Ovary (tissue), 10 donors: ENCODE measurements at regions of chr1 and their contacts with region 1.

Region 1: DNA sequence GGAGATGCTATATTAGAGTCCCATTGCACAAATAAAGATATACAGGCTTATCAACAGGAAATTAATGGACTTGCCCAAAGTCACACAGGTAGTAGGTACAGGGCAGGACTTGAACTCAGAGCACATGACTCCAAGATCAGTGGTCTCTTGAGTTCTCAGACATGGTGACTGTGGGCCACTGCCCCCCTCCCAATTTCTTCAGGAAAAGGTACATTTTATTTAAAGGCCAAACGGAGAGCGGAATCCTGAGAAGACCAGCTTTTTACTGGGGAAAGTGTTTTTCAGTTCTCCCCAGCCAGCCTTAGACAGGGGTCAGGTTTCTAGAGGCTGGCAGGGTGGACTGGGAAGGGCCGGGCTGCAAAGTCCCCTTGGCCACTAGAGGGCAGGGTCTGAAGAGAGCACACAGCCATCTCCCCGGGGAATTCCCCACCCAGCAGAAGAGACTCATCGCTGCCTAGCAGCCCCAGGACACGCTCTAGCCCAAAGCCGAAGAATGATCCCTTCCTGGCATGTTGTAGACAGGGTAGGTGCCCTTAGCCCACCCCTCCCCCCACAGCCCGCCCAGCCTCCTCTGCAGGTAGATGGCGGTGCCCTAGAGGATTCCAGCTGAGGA is 29.7 kb downstream of the ACP6 start:
- DNase-seq: peak in 4 of 5 donors; percentile 35 to 57 (median 44)
- H3K4me3 ChIP-seq: no peak overlapping the region
- H3K27ac ChIP-seq: no peak overlapping the region
- H3K4me1 ChIP-seq: no peaks in the 10 kb centered on the region
- H3K27me3 ChIP-seq: no peaks in the 10 kb centered on the region
- CTCF ChIP-seq: no peak
- EP300 ChIP-seq: no peak
- POLR2A ChIP-seq: no peak

Region 2: GRCh38 chr1:147273409-147274336 is 367.0 kb before region 1 on chr1:
- intact Hi-C with region 1: loop called in 1 of 4 experiments (anchors 10 kb)
- DNase-seq: peak in 1 of 5 donors; percentile 38
- H3K4me3 ChIP-seq: no peak overlapping the region
- H3K27ac ChIP-seq: no peak overlapping the region
- H3K4me1 ChIP-seq: no peaks in the 10 kb centered on the region
- H3K27me3 ChIP-seq: no peaks in the 10 kb centered on the region
- CTCF ChIP-seq: peak in 2 of 3 donors; percentile 42 to 48
- EP300 ChIP-seq: no peak
- POLR2A ChIP-seq: no peak

Region 3: DNA sequence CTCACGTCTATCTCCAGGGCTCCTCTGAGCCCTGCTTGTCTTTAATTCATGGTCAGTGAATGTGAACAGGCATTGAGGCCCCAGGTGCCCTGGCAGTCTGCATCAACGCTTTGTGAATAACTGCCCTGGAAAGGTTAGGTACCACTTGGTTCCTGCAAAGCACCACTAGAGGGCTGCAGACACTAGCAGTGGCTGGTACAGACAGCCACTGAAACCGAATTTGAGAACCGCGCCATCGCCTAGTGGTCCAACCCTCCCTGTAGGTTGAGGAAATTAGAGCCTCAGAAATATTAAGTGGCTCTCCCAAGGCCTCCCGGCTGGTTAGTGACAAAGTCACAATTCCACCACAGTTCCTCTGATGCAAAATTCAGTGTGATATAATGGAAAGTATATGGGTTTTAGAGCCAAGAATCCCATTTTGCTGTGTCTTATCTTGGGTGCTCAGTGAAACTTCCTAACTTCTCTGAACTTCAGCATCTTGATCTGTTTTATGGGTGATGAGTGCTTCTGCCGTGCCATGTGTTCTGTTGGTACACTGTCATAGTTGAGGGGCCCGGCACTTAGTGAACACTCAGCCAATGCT is 145.6 kb before region 1 on chr1:
- intact Hi-C with region 1: loop called in 1 of 4 experiments (anchors 5 kb)
- DNase-seq: peak; percentile 71 to 83 (median 78)
- H3K4me3 ChIP-seq: no peak overlapping the region
- H3K27ac ChIP-seq: no peak overlapping the region
- H3K4me1 ChIP-seq: peaks cover 5% of the 10 kb centered on the region
- H3K27me3 ChIP-seq: no peaks in the 10 kb centered on the region
- CTCF ChIP-seq: peak; percentile 77 to 90 (median 84)
- EP300 ChIP-seq: no peak
- POLR2A ChIP-seq: no peak